Vagina (tissue), 2 donors: ENCODE measurements at regions of chr7 and their contacts with region 1.

Region 1: DNA sequence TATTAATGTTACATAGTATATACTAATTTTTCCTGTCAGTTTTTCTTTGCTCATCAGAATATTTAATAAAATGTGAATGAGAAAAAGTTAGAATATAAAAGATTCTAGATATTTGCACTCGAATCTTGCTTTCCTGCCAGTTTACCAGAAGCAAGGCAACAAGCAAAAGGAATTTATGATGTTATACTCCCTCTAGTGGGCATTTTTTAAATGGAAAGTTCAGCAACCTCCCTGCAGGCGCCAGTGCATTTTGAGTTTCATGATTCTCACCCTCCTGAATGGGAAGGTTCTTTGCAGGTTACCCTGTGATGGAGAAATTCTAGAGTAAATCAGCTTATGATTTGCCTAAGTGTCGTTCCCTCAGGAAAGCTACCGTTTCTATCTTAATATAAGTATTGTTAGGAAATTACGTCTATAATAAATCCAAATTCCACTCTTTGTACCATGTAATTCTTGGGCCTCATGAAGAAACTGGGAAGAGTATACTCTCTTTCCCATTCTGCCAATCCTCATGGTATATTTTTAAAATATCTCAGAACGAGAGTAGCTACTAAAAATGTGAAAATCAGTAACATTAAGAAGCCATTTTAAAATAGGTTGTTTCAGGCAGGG is 350.0 kb downstream of the CRPPA start:
- DNase-seq: no peak
- H3K4me3 ChIP-seq: no peak overlapping the region
- H3K27ac ChIP-seq: no peak overlapping the region
- H3K4me1 ChIP-seq: peaks cover 17% of the 10 kb centered on the region
- H3K27me3 ChIP-seq: no peaks in the 10 kb centered on the region
- CTCF ChIP-seq: peak; percentile 64 to 78 (median 73)
- POLR2A ChIP-seq: no peak

Region 2: DNA sequence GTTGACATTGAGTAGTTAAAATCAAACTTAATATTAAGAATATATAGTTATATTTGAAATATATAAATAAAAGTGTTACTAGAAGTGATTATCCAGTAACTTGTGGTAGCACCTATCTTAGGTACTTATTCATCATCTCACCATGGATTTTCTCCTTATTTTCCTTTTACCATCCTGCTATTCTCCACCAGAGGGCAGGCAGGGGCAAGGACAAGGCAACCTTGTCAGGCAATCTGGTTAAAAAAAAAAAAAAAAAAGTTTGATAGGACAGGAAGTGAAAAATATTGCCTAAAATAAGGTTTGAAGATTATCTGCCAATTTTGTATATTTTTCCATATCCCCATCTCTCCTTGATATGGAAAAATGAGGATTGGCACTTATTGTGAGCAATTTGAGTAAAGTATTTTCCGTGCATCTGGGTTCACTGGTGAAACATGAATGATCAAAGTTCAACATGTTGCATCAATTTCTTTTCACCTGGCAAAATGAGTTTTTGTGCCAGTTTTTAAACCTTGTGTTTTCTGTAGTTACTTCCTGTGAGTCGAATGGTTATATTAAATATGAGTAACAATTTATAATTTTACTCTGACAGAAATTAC is 766.3 kb before region 1 on chr7:
- intact Hi-C with region 1: loop called (anchors 10 kb)
- DNase-seq: no peak
- H3K4me3 ChIP-seq: no peak overlapping the region
- H3K27ac ChIP-seq: no peak overlapping the region
- H3K4me1 ChIP-seq: no peaks in the 10 kb centered on the region
- H3K27me3 ChIP-seq: no peaks in the 10 kb centered on the region
- CTCF ChIP-seq: peak in 2 of 3 experiments; percentile 30 to 37
- POLR2A ChIP-seq: no peak

Region 3: DNA sequence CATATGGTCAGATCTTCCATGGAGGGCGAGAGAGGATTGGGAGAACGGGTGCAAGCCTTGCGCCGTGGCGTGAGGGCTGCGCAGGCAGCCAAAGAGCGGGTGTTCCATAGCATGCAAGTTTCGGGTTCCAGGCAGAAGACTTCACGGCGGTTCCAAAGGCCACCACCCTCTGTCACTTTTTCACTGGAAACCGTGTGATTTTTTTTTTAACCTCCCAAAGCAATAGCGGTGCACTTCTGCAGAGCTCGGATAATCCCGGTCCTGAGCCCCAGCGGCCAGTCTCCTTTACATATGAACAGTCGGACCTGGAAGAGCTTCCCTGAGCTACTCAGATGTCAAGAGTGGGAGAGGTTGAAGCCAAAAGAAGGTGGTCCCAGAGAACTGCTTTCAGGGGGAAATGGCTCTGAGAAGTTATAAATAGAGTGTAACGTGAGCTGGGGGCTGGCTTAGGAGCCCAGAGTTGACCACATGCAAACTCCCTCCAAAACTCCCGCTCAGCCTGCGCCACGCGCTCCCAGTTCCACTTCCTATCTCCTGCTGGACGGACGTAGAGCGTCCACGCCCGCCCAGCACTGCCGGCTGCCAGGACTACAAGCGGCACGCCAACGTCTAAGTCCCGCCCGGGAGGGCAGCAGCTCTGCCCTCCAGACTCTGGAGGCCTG is 384.9 kb before region 1 on chr7 and contains the start of gene MEOX2:
- intact Hi-C with region 1: loop called (anchors 5 kb)
- DNase-seq: no peak
- H3K4me3 ChIP-seq: peak within 1 kb of the TSS; percentile 51 to 52
- H3K27ac ChIP-seq: peak within 1 kb of the TSS; percentile 85
- H3K4me1 ChIP-seq: peaks cover 22% of the 10 kb centered on the region
- H3K27me3 ChIP-seq: peaks cover 5% of the 10 kb centered on the region
- CTCF ChIP-seq: no peak
- POLR2A ChIP-seq: no peak
- total RNA-seq, gene MEOX2: 1.7 TPM

Region 4: GRCh38 chr7:16015981-16016380 is 55.4 kb before region 1 on chr7:
- intact Hi-C with region 1: no loop called
- DNase-seq: no peak
- H3K4me3 ChIP-seq: no peak overlapping the region
- H3K27ac ChIP-seq: no peak overlapping the region
- H3K4me1 ChIP-seq: no peaks in the 10 kb centered on the region
- H3K27me3 ChIP-seq: no peaks in the 10 kb centered on the region
- CTCF ChIP-seq: no peak
- POLR2A ChIP-seq: no peak

Region 5: DNA sequence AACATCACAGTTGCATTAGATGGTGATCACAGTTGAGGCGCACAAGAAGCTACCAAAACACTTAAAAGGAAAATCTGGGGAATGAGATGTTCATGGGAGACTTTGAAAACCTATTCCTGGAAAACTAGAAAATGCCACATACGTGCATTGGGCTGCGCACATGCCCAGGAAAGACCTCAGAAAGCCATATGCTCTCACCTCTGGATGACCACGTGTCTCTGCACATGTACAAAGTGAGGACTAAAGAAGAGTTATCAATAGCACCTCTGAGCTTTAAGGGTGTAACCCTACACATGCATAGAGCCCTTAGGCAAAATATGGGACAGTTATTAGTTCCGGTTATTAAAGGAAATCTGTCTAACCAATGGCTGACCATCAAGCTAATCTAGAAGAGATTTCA is 272.3 kb after region 1 on chr7:
- intact Hi-C with region 1: no loop called
- DNase-seq: no peak
- H3K4me3 ChIP-seq: no peak overlapping the region
- H3K27ac ChIP-seq: no peak overlapping the region
- H3K4me1 ChIP-seq: peaks cover 7% of the 10 kb centered on the region
- H3K27me3 ChIP-seq: no peaks in the 10 kb centered on the region
- CTCF ChIP-seq: no peak
- POLR2A ChIP-seq: no peak

Region 6: GRCh38 chr7:16564909-16565426 is 493.6 kb after region 1 on chr7:
- intact Hi-C with region 1: loop called (anchors 10 kb)
- DNase-seq: no peak
- H3K4me3 ChIP-seq: no peak overlapping the region
- H3K27ac ChIP-seq: no peak overlapping the region
- H3K4me1 ChIP-seq: no peaks in the 10 kb centered on the region
- H3K27me3 ChIP-seq: no peaks in the 10 kb centered on the region
- CTCF ChIP-seq: peak; percentile 11 to 50 (median 37)
- POLR2A ChIP-seq: no peak